ENCODE measurements at regions of chr2 and their contacts with region 1.

Region 1: GRCh38 chr2:130332271-130333073 is 10.2 kb upstream of the IMP4 start:
- DNase-seq: peak; percentile 40 to 71 (median 60)
- ATAC-seq: peak; percentile 92
- H3K4me3 ChIP-seq: no peak overlapping the region
- H3K4me3 Mint-ChIP-seq: peak overlapping the region in 9 of 10 donors; percentile 15 to 64 (median 56)
- H3K27ac ChIP-seq: no peak overlapping the region
- H3K27ac Mint-ChIP-seq: peak overlapping the region in 1 of 9 donors; percentile 70
- H3K4me1 ChIP-seq: peaks cover 0 to 4% of the 10 kb centered on the region in 2 donors
- H3K4me1 Mint-ChIP-seq: peaks cover 4 to 9% (median 5%) of the 10 kb centered on the region in 7 donors
- H3K27me3 ChIP-seq: no peaks in the 10 kb centered on the region
- H3K27me3 Mint-ChIP-seq: peaks cover 26 to 37% (median 28%) of the 10 kb centered on the region in 5 donors

Region 2: DNA sequence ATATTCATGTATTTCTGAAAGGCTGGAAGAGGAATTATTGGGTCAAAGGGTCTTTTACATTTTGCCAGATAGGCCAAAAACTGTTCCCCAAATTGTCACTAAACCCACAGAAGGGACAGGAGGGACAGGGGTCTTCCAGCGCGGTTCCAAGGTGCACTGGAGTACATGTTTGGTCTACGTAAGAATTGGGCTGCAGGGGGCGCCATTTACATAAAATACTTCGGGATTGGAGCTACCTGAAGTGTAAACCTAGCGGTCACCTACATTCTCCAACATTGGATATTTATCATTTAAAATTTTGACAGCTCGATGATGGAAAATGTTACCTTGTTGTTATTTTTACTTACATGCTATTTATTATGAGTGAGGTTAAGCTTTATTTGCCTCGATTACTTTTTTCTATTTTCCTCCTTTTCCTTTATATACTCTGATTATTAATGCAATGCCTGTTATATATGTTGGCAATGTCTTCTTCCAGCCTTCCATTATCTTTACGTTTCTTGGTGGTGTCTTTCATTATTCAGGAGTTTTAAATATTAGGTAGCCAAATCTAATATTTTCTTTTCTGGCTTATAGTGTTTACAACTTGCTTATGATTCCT is 396.0 kb before region 1 on chr2:
- CTCF ChIA-PET with region 1: no interaction called
- POLR2A ChIA-PET with region 1: no interaction called
- intact Hi-C with region 1: loop called in 1 of 2 experiments (anchors 1 kb)
- DNase-seq: peak in 6 of 9 donors; percentile 8 to 55 (median 27)
- ATAC-seq: peak; percentile 56
- H3K4me3 ChIP-seq: no peak overlapping the region
- H3K4me3 Mint-ChIP-seq: no peak overlapping the region
- H3K27ac ChIP-seq: no peak overlapping the region
- H3K27ac Mint-ChIP-seq: no peak overlapping the region
- H3K4me1 ChIP-seq: no peaks in the 10 kb centered on the region
- H3K4me1 Mint-ChIP-seq: no peaks in the 10 kb centered on the region
- H3K27me3 ChIP-seq: no peaks in the 10 kb centered on the region
- H3K27me3 Mint-ChIP-seq: peaks cover 8 to 46% (median 37%) of the 10 kb centered on the region in 5 donors

Region 3: DNA sequence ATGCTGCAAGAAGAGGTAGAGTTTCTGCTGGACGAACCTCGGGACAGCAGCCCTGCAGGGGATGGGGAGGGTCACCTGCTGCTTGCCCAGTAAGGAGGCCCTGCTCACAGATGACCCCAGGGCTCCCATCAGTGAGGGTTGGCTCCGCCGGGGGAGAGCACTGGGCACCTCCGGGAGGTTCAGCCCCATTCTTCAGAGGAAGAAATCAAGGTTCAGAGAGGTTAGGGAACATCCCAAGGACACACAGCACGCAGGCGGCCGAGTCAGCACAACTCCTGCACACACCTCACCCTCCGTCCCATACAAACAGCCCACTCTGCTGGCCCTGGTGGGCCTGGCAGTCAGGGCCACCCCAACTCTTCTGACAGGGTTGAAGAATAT is 175.9 kb before region 1 on chr2:
- CTCF ChIA-PET with region 1: interaction called, 3 read pairs
- POLR2A ChIA-PET with region 1: no interaction called
- intact Hi-C with region 1: loop called (anchors 1 kb)
- DNase-seq: no peak
- ATAC-seq: no peak
- H3K4me3 ChIP-seq: no peak overlapping the region
- H3K4me3 Mint-ChIP-seq: no peak overlapping the region
- H3K27ac ChIP-seq: no peak overlapping the region
- H3K27ac Mint-ChIP-seq: peak overlapping the region in 1 of 9 donors; percentile 38
- H3K4me1 ChIP-seq: no peaks in the 10 kb centered on the region
- H3K4me1 Mint-ChIP-seq: peaks cover 0 to 17% (median 0%) of the 10 kb centered on the region in 7 donors
- H3K27me3 ChIP-seq: no peaks in the 10 kb centered on the region
- H3K27me3 Mint-ChIP-seq: no peaks in the 10 kb centered on the region

Measured in naive thymus-derived CD4-positive, alpha-beta T cell (primary cell).